Mammary epithelial cell (primary cell): ENCODE measurements at regions of chr1 and their contacts with region 1.

Region 1: GRCh38 chr1:208919371-208919770 is 664.1 kb upstream of the CAMK1G start:
- DNase-seq: peak; percentile 41
- H3K4me3 ChIP-seq: no peak overlapping the region
- H3K27ac ChIP-seq: peak overlapping the region; percentile 3
- H3K4me1 ChIP-seq: peaks cover 32% of the 10 kb centered on the region
- H3K27me3 ChIP-seq: no peaks in the 10 kb centered on the region
- CTCF ChIP-seq: no peak

Region 2: DNA sequence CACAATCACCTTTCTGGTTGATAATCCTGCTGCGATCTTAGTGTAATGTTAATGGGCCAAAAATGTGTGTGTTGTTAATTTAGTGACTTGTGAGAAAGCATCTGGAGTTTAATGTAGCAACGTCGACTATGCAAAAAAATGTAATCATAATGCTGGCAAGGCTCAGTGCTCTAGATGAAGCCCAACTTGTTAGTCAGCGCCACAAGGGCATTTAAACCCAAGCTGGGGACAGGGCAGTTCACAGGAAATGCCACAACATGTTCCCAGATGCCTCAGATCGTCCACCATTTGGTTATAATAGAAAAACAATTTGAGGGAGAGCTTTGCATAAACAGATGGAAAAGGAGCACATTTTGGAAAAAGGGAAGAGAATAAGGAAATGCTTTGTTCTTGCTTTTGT is 89.8 kb before region 1 on chr1:
- CTCF ChIA-PET with region 1: no interaction called
- dilution Hi-C with region 1: no loop called
- in situ Hi-C with region 1: no loop called
- intact Hi-C with region 1: no loop called
- DNase-seq: peak; percentile 19
- H3K4me3 ChIP-seq: no peak overlapping the region
- H3K27ac ChIP-seq: no peak overlapping the region
- H3K4me1 ChIP-seq: peaks cover 7% of the 10 kb centered on the region
- H3K27me3 ChIP-seq: no peaks in the 10 kb centered on the region
- CTCF ChIP-seq: no peak

Region 3: GRCh38 chr1:208988811-208989222 is 69.4 kb after region 1 on chr1:
- CTCF ChIA-PET with region 1: no interaction called
- dilution Hi-C with region 1: no loop called
- in situ Hi-C with region 1: no loop called
- intact Hi-C with region 1: loop called (anchors 5 kb)
- DNase-seq: peak; percentile 58
- H3K4me3 ChIP-seq: peak overlapping the region; percentile 28 to 65 (median 46)
- H3K27ac ChIP-seq: peak overlapping the region; percentile 29
- H3K4me1 ChIP-seq: peaks cover 34% of the 10 kb centered on the region
- H3K27me3 ChIP-seq: no peaks in the 10 kb centered on the region
- CTCF ChIP-seq: no peak

Region 4: GRCh38 chr1:209023790-209024189 is 104.4 kb after region 1 on chr1:
- CTCF ChIA-PET with region 1: no interaction called
- dilution Hi-C with region 1: no loop called
- in situ Hi-C with region 1: no loop called
- intact Hi-C with region 1: no loop called
- DNase-seq: no peak
- H3K4me3 ChIP-seq: no peak overlapping the region
- H3K27ac ChIP-seq: no peak overlapping the region
- H3K4me1 ChIP-seq: no peaks in the 10 kb centered on the region
- H3K27me3 ChIP-seq: no peaks in the 10 kb centered on the region
- CTCF ChIP-seq: no peak